Activated CD8-positive, alpha-beta T cell treated with anti-CD3 and anti-CD28 coated beads for 36 hours (primary cell): ENCODE measurements at regions of chr11 and their contacts with region 1.

Region 1: GRCh38 chr11:45846974-45847910 is at the start of gene CRY2:
- DNase-seq: peak; percentile 99
- ATAC-seq: peak; percentile 92
- H3K4me3 Mint-ChIP-seq: peak within 1 kb of the TSS; percentile 79
- H3K27ac Mint-ChIP-seq: peak within 1 kb of the TSS; percentile 85
- H3K4me1 Mint-ChIP-seq: peaks cover 48% of the 10 kb centered on the region
- H3K27me3 Mint-ChIP-seq: no peaks in the 10 kb centered on the region
- CTCF ChIP-seq: no peak
- total RNA-seq, gene CRY2: 12.3 to 15.7 TPM

Region 2: GRCh38 chr11:45804761-45805304 is 42.4 kb before region 1 on chr11 and contains the start of gene SLC35C1:
- CTCF ChIA-PET with region 1: interaction called, 24 read pairs
- POLR2A ChIA-PET with region 1: interaction called, 7 read pairs
- intact Hi-C with region 1: no loop called
- DNase-seq: peak; percentile 98
- ATAC-seq: peak; percentile 98
- H3K4me3 Mint-ChIP-seq: peak within 1 kb of the TSS; percentile 91
- H3K27ac Mint-ChIP-seq: peak within 1 kb of the TSS; percentile 88
- H3K4me1 Mint-ChIP-seq: peaks cover 38% of the 10 kb centered on the region
- H3K27me3 Mint-ChIP-seq: no peaks in the 10 kb centered on the region
- CTCF ChIP-seq: no peak
- total RNA-seq, gene SLC35C1: 9.3 to 9.4 TPM

Region 3: DNA sequence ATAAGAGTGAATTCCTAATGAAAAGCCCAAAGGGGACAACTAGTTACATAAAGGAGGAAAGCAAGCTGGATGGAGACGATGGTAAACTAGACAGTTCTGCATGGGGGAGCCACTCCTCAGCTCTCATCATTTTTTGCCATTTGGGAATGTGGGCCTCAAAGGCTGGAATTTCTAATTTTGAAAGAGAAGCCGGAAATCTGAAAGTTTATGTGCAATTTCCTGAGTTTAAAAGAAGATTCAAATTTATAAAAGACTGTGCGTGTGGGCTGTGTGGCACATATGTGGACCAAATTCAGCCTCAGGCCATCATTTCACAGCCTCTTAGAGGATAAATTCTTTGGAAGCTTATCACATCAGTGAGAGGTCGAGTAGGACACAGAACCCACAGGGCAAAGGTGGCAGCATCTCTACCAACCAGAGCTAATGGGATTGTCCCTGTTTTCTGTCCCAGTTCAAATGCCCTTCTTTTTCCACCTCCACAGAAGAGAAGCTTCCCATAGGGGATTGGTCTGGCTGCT is 18.2 kb before region 1 on chr11:
- CTCF ChIA-PET with region 1: interaction called, 18 read pairs
- POLR2A ChIA-PET with region 1: interaction called, 4 read pairs
- intact Hi-C with region 1: no loop called
- DNase-seq: no peak
- ATAC-seq: no peak
- H3K4me3 Mint-ChIP-seq: no peak overlapping the region
- H3K27ac Mint-ChIP-seq: no peak overlapping the region
- H3K4me1 Mint-ChIP-seq: peaks cover 5% of the 10 kb centered on the region
- H3K27me3 Mint-ChIP-seq: peaks cover 10% of the 10 kb centered on the region
- CTCF ChIP-seq: no peak

Region 4: DNA sequence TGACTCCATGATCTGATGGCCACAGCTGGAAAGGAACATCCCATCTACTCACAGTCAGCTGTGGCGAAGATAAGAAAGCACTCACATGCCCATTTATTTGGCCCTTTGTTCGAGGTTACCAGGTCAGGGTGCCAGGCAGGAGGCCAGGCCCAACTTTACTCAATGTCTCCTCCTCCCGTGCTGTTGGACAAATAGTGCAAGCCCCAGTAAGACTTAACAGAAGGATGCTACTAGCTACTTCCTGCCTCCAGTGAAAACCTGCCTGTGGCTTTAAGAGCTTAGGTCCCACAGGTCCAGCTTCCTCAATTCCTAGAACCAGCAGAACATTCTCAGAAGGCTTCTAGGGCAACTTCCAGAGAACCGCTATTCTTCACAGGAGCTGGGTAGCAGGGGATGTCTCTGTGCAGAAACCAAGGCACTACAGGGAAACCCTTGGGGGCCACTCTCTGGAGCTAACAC is 12.9 kb before region 1 on chr11:
- CTCF ChIA-PET with region 1: interaction called, 18 read pairs
- POLR2A ChIA-PET with region 1: interaction called, 4 read pairs
- intact Hi-C with region 1: no loop called
- DNase-seq: peak; percentile 47
- ATAC-seq: peak; percentile 96
- H3K4me3 Mint-ChIP-seq: peak overlapping the region; percentile 18
- H3K27ac Mint-ChIP-seq: peak overlapping the region; percentile 77
- H3K4me1 Mint-ChIP-seq: peaks cover 13% of the 10 kb centered on the region
- H3K27me3 Mint-ChIP-seq: peaks cover 7% of the 10 kb centered on the region
- CTCF ChIP-seq: no peak

Region 5: DNA sequence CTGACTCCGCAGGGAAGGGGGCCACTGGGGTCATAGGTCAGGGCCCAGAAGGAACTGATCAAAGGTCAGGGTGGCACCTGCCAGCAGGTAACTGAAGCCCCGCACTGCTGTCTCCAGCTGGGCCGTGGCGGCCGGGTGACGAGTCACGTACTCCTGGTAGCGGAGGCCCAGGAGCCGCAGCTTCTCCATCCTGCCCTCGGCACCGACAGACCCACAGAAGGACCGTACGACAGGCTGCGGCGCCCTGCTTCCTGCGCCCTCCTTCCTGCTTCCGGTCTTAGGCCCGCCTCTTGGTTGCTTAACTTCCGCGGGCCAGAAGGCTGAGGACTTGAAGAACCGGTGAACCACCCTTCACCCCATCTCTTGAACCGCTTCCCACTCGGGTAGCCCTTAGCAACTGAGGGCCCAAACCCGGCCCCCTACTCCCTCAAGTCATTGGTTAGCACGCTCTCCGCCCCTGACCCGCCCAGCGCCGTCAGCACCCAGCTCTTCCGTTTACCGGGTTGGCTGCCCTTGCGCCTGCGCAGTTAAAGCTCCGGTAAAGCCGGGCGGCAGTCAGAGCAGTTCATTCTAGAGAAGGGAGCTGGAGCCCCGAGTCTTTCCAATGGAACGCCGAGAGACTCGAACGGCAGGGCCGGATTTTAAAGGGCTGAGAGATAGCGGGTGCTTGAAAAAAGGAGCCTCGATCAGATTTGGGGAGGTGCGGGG is 70.5 kb after region 1 on chr11 and contains the start of gene PEX16:
- CTCF ChIA-PET with region 1: interaction called, 3 read pairs
- POLR2A ChIA-PET with region 1: interaction called, 3 read pairs
- intact Hi-C with region 1: loop called (anchors 2 kb)
- DNase-seq: peak; percentile 97
- ATAC-seq: peak; percentile 91
- H3K4me3 Mint-ChIP-seq: peak within 1 kb of the TSS; percentile 89
- H3K27ac Mint-ChIP-seq: peak within 1 kb of the TSS; percentile 97
- H3K4me1 Mint-ChIP-seq: peaks cover 21% of the 10 kb centered on the region
- H3K27me3 Mint-ChIP-seq: peaks cover 2% of the 10 kb centered on the region
- CTCF ChIP-seq: no peak
- total RNA-seq, gene PEX16: 34.4 to 35.2 TPM